ENCODE measurements at regions of chr2 and their contacts with region 1.

Region 1: DNA sequence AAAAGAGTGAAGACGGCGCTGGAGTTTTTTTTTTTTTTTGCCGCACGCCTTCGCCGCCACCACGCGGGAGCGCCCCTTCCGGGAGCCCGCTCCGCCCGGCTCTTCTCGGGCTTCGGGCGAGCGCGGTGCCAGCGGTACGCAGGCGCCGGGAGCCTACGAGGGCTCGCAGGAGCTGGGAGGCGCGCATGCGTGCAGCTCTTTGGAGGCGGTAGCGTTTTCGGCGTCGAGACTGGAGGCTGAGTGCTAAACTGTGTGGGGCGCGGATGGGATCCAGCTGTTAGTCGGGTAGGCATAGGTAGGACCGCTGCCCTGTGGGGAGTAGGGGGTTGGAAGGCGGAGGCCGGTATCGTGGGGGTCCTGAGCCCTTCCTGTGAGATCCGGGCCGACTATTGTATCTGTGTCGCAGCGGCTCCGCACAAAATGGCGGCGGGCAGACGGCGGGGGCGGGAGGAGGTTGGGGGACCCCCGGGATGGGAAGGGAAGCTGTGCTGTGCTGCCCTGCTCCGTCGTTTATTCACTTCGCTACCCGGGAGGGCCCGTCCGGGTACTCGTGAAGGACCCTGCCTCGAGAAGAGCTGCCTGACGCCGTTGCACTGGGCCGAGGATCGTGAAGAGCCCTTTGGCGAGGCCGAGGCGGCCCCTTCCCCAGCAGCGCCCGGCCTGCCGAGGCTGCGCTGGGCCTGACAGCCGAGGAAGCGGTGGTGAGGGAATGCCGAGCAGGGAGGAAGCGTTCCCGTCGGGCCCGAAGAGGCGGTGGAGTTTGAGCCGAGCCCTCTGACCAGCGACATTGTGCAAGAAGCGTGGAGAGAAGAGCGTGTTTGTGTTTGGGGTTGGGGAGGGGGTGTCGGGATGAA is at the start of gene ZNF638:
- DNase-seq: peak; percentile 83 to 98 (median 92)
- ATAC-seq: peak; percentile 97
- H3K4me3 ChIP-seq: peak within 1 kb of the TSS; percentile 74 to 98
- H3K4me3 Mint-ChIP-seq: peak within 1 kb of the TSS; percentile 99
- H3K27ac ChIP-seq: peak within 1 kb of the TSS; percentile 95 to 98
- H3K27ac Mint-ChIP-seq: peak within 1 kb of the TSS; percentile 100
- H3K4me1 ChIP-seq: peaks cover 40% of the 10 kb centered on the region
- H3K4me1 Mint-ChIP-seq: peaks cover 42% of the 10 kb centered on the region
- H3K27me3 ChIP-seq: no peaks in the 10 kb centered on the region
- H3K27me3 Mint-ChIP-seq: peaks cover 5% of the 10 kb centered on the region
- CTCF ChIP-seq: peak; percentile 66
- total RNA-seq, gene ZNF638: 61.9 to 71.1 TPM

Region 2: GRCh38 chr2:70214953-70215549 is 1116.8 kb before region 1 on chr2:
- CTCF ChIA-PET with region 1: no interaction called
- POLR2A ChIA-PET with region 1: no interaction called
- intact Hi-C with region 1: no loop called
- DNase-seq: no peak
- ATAC-seq: no peak
- H3K4me3 ChIP-seq: no peak overlapping the region
- H3K4me3 Mint-ChIP-seq: no peak overlapping the region
- H3K27ac ChIP-seq: no peak overlapping the region
- H3K27ac Mint-ChIP-seq: no peak overlapping the region
- H3K4me1 ChIP-seq: no peaks in the 10 kb centered on the region
- H3K4me1 Mint-ChIP-seq: peaks cover 3% of the 10 kb centered on the region
- H3K27me3 ChIP-seq: no peaks in the 10 kb centered on the region
- H3K27me3 Mint-ChIP-seq: no peaks in the 10 kb centered on the region
- CTCF ChIP-seq: no peak

Region 3: GRCh38 chr2:71226965-71227560 is 104.7 kb before region 1 on chr2 and contains the start of gene PAIP2B:
- CTCF ChIA-PET with region 1: interaction called, 3 read pairs
- POLR2A ChIA-PET with region 1: interaction called, 16 read pairs
- intact Hi-C with region 1: loop called (anchors 1 to 2 kb)
- DNase-seq: peak; percentile 95 to 99 (median 96)
- ATAC-seq: peak; percentile 89
- H3K4me3 ChIP-seq: peak within 1 kb of the TSS; percentile 77 to 81
- H3K4me3 Mint-ChIP-seq: peak within 1 kb of the TSS; percentile 97
- H3K27ac ChIP-seq: peak within 1 kb of the TSS; percentile 79 to 81
- H3K27ac Mint-ChIP-seq: peak within 1 kb of the TSS; percentile 98
- H3K4me1 ChIP-seq: peaks cover 15% of the 10 kb centered on the region
- H3K4me1 Mint-ChIP-seq: peaks cover 31% of the 10 kb centered on the region
- H3K27me3 ChIP-seq: peaks cover 0 to 2% of the 10 kb centered on the region in 2 experiments
- H3K27me3 Mint-ChIP-seq: peaks cover 12% of the 10 kb centered on the region
- CTCF ChIP-seq: no peak
- total RNA-seq, gene PAIP2B: 1.7 to 1.8 TPM

Region 4: GRCh38 chr2:71276311-71277146 is 55.3 kb before region 1 on chr2:
- CTCF ChIA-PET with region 1: no interaction called
- POLR2A ChIA-PET with region 1: interaction called, 3 read pairs
- intact Hi-C with region 1: loop called in 1 of 2 experiments (anchors 2 kb)
- DNase-seq: peak; percentile 58 to 88 (median 77)
- ATAC-seq: peak; percentile 99
- H3K4me3 ChIP-seq: peak overlapping the region; percentile 55 to 80
- H3K4me3 Mint-ChIP-seq: peak overlapping the region; percentile 76
- H3K27ac ChIP-seq: no peak overlapping the region
- H3K27ac Mint-ChIP-seq: no peak overlapping the region
- H3K4me1 ChIP-seq: peaks cover 16% of the 10 kb centered on the region
- H3K4me1 Mint-ChIP-seq: peaks cover 16% of the 10 kb centered on the region
- H3K27me3 ChIP-seq: peaks cover 18 to 28% of the 10 kb centered on the region in 2 experiments
- H3K27me3 Mint-ChIP-seq: peaks cover 70% of the 10 kb centered on the region
- CTCF ChIP-seq: no peak

Region 5: DNA sequence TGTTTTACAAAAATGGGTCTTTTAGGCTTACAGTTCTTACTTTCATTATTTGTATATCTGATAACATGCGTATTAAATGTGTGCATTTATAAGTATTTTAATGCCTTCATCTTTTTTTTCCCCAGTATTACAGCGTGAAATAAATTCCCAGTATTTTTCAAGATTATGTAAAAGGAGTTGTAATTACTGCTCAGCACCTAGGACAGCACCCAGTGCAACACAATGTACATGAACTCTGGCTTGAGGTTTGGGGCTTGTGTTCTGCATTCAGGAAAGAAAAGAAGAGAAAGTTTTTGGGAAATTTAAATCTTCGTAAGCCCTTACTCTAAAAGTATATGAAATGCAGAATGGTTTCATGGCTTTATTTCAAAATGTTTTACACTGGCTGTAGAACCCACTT is 16.5 kb after region 1 on chr2:
- CTCF ChIA-PET with region 1: interaction called, 9 read pairs
- POLR2A ChIA-PET with region 1: no interaction called
- intact Hi-C with region 1: loop called in 1 of 2 experiments (anchors 2 kb)
- DNase-seq: peak in 2 of 9 experiments; percentile 32 to 37
- ATAC-seq: no peak
- H3K4me3 ChIP-seq: no peak overlapping the region
- H3K4me3 Mint-ChIP-seq: no peak overlapping the region
- H3K27ac ChIP-seq: no peak overlapping the region
- H3K27ac Mint-ChIP-seq: no peak overlapping the region
- H3K4me1 ChIP-seq: no peaks in the 10 kb centered on the region
- H3K4me1 Mint-ChIP-seq: peaks cover 68% of the 10 kb centered on the region
- H3K27me3 ChIP-seq: no peaks in the 10 kb centered on the region
- H3K27me3 Mint-ChIP-seq: no peaks in the 10 kb centered on the region
- CTCF ChIP-seq: no peak